CD8-positive, alpha-beta T cell (primary cell): ENCODE measurements at regions of chr2 and their contacts with region 1.

Region 1: DNA sequence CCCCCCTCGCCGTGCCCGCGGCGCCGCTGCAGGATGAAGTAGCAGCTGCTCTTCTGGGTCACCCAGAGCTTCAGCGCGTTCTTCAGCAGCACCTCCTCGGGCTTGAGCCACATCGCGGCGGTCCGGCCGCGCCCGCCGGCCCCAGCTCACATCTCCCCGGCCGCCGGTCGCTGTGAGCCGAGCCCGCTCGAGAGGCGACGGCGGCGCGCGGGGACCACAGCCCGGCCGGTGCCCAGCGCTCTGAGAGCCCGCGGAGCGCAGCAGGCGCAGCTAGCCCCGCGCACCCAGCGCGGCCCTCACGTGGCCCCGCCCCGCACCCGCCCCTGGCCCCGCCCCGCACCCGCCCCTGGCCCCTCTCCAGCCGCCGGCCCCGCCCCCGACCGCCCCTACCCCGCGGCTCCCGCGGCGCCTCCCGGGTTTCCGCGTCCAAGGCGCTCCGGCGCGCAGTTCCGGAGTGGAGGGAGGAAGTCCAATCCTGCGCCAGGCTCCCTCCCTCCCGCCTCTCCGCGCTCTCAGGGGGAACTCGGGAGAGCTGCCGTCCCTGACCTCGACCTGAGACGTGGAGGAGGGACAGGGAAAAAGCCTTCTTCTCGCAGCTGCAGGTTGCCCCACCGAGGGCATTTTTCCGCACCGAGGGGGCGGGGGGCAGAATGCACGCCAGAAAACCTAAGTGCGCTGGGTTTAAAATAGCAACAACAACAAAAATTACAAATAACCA is at the start of gene TBC1D8:
- DNase-seq: peak in 8 of 9 experiments; percentile 45 to 78 (median 56)
- ATAC-seq: peak; percentile 83
- H3K4me3 ChIP-seq: peak within 1 kb of the TSS; percentile 38 to 56
- H3K4me3 Mint-ChIP-seq: peak within 1 kb of the TSS; percentile 87
- H3K27ac ChIP-seq: peak within 1 kb of the TSS in 1 of 2 experiments; percentile 40
- H3K27ac Mint-ChIP-seq: no peak within 1 kb of the TSS
- H3K4me1 ChIP-seq: peaks cover 25% of the 10 kb centered on the region
- H3K4me1 Mint-ChIP-seq: peaks cover 25% of the 10 kb centered on the region
- H3K27me3 ChIP-seq: peaks cover 0 to 6% of the 10 kb centered on the region in 2 experiments
- H3K27me3 Mint-ChIP-seq: peaks cover 8% of the 10 kb centered on the region
- CTCF ChIP-seq: no peak
- total RNA-seq, gene TBC1D8: 0.47 to 1.1 TPM

Region 2: DNA sequence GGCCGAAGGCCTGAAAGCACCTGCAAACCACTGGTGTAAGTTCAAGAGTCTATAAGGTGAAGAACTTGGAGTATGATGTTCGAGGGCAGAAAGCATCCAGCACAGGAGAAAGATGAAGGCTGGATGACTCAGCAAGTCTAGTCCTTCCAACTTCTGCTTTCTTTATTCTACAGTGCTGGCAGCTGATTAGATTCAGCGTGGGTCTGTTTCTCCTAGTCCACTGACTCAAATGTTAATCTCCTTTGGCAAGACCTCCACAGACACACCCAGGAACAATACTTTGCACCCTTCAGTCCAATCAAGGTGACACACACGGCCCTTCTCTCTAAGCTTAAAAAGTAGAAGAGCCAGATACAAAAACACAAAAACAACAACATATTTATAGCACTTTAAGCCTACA is 637.6 kb before region 1 on chr2:
- CTCF ChIA-PET with region 1: no interaction called
- POLR2A ChIA-PET with region 1: no interaction called
- intact Hi-C with region 1: loop called in 1 of 2 experiments (anchors 10 kb)
- DNase-seq: no peak
- ATAC-seq: no peak
- H3K4me3 ChIP-seq: no peak overlapping the region
- H3K4me3 Mint-ChIP-seq: no peak overlapping the region
- H3K27ac ChIP-seq: no peak overlapping the region
- H3K27ac Mint-ChIP-seq: no peak overlapping the region
- H3K4me1 ChIP-seq: no peaks in the 10 kb centered on the region
- H3K4me1 Mint-ChIP-seq: no peaks in the 10 kb centered on the region
- H3K27me3 ChIP-seq: no peaks in the 10 kb centered on the region
- H3K27me3 Mint-ChIP-seq: peaks cover 2% of the 10 kb centered on the region
- CTCF ChIP-seq: no peak

Region 3: GRCh38 chr2:101135412-101136296 is 15.6 kb before region 1 on chr2:
- CTCF ChIA-PET with region 1: no interaction called
- POLR2A ChIA-PET with region 1: no interaction called
- intact Hi-C with region 1: no loop called
- DNase-seq: no peak
- ATAC-seq: no peak
- H3K4me3 ChIP-seq: no peak overlapping the region
- H3K4me3 Mint-ChIP-seq: no peak overlapping the region
- H3K27ac ChIP-seq: no peak overlapping the region
- H3K27ac Mint-ChIP-seq: no peak overlapping the region
- H3K4me1 ChIP-seq: no peaks in the 10 kb centered on the region
- H3K4me1 Mint-ChIP-seq: no peaks in the 10 kb centered on the region
- H3K27me3 ChIP-seq: peaks cover 0 to 5% of the 10 kb centered on the region in 2 experiments
- H3K27me3 Mint-ChIP-seq: peaks cover 14% of the 10 kb centered on the region
- CTCF ChIP-seq: no peak